ENCODE measurements at regions of chr19 and their contacts with region 1.

Region 1: DNA sequence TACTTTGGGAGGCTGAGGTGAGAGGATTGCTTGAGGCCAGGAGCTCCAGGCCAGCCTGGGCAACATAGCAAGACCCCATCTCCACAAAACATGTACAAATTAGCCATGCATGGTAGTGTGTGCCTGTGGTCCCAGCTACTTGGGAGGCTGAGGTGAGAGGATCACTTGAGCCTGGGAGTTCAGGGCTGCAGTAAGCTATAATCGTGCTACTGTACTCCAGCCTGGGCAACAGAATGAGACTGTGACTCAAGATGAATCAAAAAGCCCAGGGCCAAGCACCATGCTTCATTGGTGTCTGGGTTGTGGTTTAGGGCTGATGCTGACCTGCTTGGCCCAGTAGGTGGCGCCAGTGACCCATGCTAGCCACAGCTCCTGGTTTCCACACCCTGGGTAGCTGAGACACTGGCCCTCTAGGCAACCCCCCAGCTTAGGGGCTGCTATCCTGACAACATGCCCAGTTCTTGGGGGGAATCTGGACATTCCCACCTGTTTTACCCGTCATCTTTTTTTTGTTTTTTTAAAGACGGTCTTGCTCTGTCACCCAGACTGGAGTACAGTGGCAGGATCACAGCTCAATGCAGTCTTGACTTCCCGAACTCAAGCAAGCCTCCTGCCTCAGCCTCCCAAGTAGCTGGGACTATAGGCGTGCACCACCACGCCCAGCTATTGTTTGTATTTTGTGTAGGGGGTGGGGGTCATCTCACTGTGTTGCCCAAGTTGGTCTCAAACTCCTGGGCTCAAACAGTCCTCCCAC is 5.5 kb downstream of the CCDC124 start:
- DNase-seq: peak; percentile 85
- ATAC-seq: peak; percentile 75
- H3K4me3 Mint-ChIP-seq: no peak overlapping the region
- H3K27ac Mint-ChIP-seq: no peak overlapping the region
- H3K4me1 Mint-ChIP-seq: peaks cover 16% of the 10 kb centered on the region
- H3K27me3 Mint-ChIP-seq: no peaks in the 10 kb centered on the region; the same call in 1 of the 2 replicates
- CTCF ChIP-seq: peak; percentile 92

Region 2: DNA sequence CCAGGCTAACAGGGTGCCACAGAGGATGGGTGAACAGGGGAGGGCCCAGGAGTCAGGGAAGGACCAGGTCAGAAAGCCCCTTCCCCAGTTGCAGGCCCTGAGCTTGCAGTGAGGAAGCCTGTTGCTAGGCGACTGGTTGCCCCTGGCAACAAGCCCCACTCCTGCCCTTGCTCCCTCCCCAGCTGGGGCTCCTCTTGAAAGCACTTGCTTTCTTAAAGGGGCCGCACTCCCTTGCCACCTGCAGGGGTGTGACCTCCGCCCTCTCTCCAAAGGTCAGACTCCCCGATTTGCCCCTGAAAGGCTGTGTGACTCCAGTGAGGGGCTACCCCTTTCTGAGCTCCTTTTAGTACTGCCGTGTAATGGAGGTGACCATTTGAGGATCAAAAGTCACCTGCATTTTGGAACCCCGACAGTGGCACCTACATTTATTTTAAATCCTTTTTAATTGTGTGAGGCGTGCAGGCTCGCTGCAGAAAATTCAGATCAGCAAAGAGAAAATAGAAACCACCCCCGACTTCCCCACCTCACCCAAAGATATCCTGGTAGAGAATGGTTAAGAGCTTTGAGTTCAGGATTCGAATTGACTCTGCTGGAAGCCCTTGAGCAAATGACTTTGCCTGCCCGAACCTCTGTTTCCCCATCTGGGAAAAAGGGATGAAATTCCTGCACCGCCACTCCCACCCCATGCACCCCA is 182.1 kb before region 1 on chr19:
- CTCF ChIA-PET with region 1: no interaction called
- POLR2A ChIA-PET with region 1: no interaction called
- DNase-seq: peak; percentile 86
- ATAC-seq: peak; percentile 81
- H3K4me3 Mint-ChIP-seq: no peak overlapping the region
- H3K27ac Mint-ChIP-seq: no peak overlapping the region
- H3K4me1 Mint-ChIP-seq: peaks cover 25% of the 10 kb centered on the region
- H3K27me3 Mint-ChIP-seq: no peaks in the 10 kb centered on the region; the same call in 1 of the 2 replicates
- CTCF ChIP-seq: no peak

Region 3: DNA sequence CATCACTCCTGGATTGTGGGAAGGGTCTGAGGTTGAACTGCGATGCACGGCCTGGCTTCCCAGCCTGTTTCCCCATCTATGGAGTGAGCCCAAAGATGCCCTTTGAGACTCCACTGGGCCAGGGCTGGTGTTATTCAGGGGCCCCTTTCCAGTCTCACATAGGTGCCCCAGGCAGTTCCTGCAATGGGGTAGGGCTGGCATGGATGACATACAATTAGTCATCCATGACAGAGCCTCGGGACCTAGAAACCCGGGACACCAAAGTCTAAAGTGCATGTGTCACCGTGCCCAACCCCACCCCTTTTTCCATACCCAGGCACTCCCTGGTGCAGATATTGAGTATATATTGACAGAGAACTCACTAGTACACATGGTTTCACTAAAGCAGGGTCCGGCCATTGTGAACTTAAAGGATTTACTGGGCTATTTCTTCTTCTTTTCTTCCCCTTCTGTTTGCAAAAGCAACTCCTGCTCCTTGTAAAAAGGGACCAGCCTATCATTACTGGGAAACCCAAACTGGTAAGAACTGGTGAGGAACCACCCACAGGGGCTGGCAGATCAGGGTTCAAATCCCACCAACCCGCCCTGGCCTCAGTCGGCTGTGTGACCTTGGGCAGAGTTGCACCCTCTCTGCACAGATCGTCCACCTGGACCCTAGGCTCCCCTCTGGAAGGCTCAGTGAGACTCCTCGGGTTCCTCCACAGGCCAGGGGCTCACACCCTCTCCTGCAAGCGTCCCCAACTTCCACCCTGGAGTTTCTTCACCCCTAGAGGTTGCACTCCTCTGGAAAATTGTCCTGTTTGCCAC is 140.7 kb before region 1 on chr19:
- CTCF ChIA-PET with region 1: no interaction called
- POLR2A ChIA-PET with region 1: no interaction called
- DNase-seq: no peak
- ATAC-seq: no peak
- H3K4me3 Mint-ChIP-seq: no peak overlapping the region
- H3K27ac Mint-ChIP-seq: no peak overlapping the region
- H3K4me1 Mint-ChIP-seq: peaks cover 8% of the 10 kb centered on the region
- H3K27me3 Mint-ChIP-seq: peaks cover 29% of the 10 kb centered on the region
- CTCF ChIP-seq: no peak

Region 4: DNA sequence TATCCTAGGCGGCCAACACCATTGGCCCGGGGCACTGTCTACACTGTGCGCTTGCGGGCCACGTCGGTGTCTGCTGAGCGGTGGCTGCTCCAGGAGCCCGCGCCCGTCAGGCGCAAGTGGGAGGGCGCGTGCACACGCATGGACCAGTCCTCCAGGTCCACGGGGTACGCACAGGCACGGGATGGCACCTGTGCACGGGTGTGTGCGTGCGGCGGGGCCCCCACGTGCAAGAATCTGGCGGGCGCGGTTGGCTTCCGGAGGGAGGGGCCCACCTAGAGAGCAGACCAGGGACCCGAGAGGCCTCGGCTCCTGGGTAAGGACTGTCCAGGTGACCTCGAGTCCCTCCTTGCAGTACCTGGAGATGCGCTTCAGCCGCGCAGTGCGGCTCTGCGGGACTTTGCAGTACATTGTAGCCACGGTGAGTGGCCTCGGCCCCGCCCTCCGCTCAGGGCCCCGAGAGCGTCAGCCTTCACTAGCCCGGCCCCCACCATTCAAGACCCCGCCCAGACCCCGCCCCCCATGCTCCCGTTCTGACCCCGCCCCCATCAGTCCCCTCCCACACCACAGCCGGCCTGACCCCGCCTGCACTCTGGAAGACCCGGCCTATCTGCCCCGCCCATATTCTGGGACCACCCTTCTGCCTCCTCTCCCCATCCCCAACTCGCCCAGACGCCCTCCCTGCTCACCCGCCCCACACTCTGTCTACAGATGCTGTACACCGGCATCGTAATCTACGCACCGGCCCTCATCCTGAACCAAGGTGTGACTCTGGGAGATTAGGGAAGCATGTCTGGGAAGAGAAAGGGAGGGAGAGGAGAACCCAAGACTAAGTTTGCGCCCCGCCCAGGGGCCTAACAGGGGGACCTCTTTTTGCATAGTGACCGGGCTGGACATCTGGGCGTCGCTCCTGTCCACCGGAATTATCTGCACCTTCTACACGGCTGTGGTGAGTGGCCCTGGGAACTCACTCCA is 64.2 kb before region 1 on chr19:
- CTCF ChIA-PET with region 1: interaction called, 173 read pairs
- POLR2A ChIA-PET with region 1: interaction called, 23 read pairs
- DNase-seq: peak; percentile 88
- ATAC-seq: peak; percentile 76
- H3K4me3 Mint-ChIP-seq: peak overlapping the region; percentile 68
- H3K27ac Mint-ChIP-seq: no peak overlapping the region
- H3K4me1 Mint-ChIP-seq: peaks cover 12% of the 10 kb centered on the region
- H3K27me3 Mint-ChIP-seq: peaks cover 13% of the 10 kb centered on the region
- CTCF ChIP-seq: no peak

Region 5: GRCh38 chr19:17957149-17957849 is 19.0 kb after region 1 on chr19:
- CTCF ChIA-PET with region 1: interaction called, 13 read pairs
- POLR2A ChIA-PET with region 1: interaction called, 7 read pairs
- DNase-seq: no peak
- ATAC-seq: no peak
- H3K4me3 Mint-ChIP-seq: no peak overlapping the region
- H3K27ac Mint-ChIP-seq: no peak overlapping the region; the same call in none of the 2 replicates
- H3K4me1 Mint-ChIP-seq: peaks cover 22% of the 10 kb centered on the region
- H3K27me3 Mint-ChIP-seq: peaks cover 22% of the 10 kb centered on the region
- CTCF ChIP-seq: no peak

Region 6: DNA sequence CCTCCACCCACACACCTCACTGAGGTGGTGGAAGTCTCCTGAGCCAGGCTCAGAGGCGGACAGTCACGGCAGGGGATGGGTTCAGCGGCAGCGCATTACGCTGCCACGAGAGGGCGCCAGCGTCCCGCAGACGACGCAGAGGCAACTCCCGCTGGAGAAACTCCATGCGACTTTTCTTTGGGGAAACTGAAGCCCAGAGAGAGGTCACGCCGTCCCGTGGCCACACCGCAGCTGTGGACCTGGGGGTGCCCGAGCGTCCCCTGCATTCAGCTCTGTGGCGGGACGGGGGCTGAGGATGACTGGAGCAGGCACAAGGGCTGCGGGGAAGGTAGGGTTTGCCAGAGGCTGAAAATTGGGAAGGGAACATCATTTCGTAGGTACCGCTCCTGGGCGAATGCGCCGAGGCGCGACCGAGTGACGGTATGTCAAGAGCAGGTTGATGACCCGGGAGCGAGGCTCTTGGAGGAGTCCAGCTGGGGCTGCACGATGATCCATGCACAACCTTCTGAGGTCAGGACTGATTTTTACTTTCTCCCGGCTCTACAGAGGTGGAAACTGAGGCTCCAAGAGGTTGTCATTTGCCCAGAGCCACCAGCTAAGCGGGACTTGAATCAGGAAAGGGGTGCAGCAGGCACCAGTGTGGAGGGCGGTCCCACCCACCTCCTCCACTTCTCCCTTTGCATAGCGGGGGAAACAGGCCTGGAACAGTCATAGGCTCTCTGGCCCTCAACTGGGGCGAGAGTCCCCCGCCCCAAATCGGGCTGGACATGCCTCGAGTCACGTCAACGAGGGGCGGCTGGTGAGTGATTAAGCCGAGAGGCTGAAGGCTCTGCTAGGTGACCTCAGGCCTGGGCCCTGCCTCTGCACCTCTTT is 69.0 kb after region 1 on chr19:
- CTCF ChIA-PET with region 1: interaction called, 11 read pairs
- POLR2A ChIA-PET with region 1: no interaction called
- DNase-seq: peak; percentile 88
- ATAC-seq: peak; percentile 76
- H3K4me3 Mint-ChIP-seq: peak overlapping the region; percentile 90
- H3K27ac Mint-ChIP-seq: peak overlapping the region; percentile 88; the same call in 1 of the 2 replicates
- H3K4me1 Mint-ChIP-seq: peaks cover 6% of the 10 kb centered on the region; the same call in 1 of the 2 replicates
- H3K27me3 Mint-ChIP-seq: peaks cover 23% of the 10 kb centered on the region
- CTCF ChIP-seq: peak; percentile 96

Measured in WTC11 (cell line).